ENCODE measurements at regions of chr19 and their contacts with region 1.

Region 1: DNA sequence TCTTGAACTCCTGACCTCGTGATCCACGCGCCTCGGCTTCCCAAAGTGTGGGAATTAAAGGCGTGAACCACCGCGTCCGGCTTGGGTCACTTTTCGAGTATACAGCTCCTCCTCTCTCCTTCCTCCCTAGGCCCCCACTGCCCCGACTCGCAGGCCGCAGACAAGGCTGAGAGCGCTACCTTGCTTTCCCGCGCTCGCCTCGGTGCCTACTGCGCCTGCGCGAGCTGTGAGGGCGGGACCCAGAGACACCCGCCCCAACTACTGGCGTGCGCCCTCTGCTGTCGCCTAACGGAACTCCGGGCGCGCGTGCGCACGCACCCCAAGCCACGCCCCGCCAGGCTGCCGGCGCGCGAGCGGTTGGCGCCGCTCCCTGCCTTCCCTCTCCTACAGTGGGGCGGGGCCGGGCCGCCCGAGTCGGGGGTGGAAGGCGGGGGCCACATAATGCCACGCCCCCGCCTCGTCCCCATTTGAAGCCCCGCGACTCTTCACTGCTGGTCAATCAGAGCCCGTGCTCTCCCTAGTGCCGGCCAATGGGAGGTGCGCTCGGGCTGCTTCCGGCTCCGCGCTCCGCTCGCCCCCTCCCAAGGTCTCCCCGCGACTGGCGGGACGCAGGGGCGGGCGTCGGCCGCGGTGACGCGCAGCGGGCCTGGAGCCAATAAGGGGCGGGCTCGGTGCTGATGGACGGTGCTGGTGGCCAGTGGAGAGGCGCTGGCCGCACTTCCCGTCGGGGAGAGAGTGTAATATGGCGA is at the start of gene RAB8A:
- DNase-seq: peak; percentile 98 to 100 (median 99)
- ATAC-seq: peak; percentile 86
- H3K4me3 ChIP-seq: peak within 1 kb of the TSS; percentile 94
- H3K4me3 Mint-ChIP-seq: peak within 1 kb of the TSS; percentile 95
- H3K27ac ChIP-seq: peak within 1 kb of the TSS; percentile 89 to 92
- H3K27ac Mint-ChIP-seq: peak within 1 kb of the TSS; percentile 96
- H3K4me1 ChIP-seq: peaks cover 51% of the 10 kb centered on the region
- H3K4me1 Mint-ChIP-seq: peaks cover 44% of the 10 kb centered on the region
- H3K27me3 ChIP-seq: no peaks in the 10 kb centered on the region
- H3K27me3 Mint-ChIP-seq: no peaks in the 10 kb centered on the region
- CTCF ChIP-seq: peak; percentile 84
- total RNA-seq, gene RAB8A: 74.9 to 79.0 TPM

Region 2: GRCh38 chr19:16041299-16041990 is 69.9 kb before region 1 on chr19:
- CTCF ChIA-PET with region 1: interaction called, 19 read pairs
- POLR2A ChIA-PET with region 1: interaction called, 5 read pairs
- intact Hi-C with region 1: loop called in 1 of 2 experiments (anchors 2 kb)
- DNase-seq: peak; percentile 55 to 84 (median 68)
- ATAC-seq: peak; percentile 79
- H3K4me3 ChIP-seq: peak overlapping the region; percentile 11
- H3K4me3 Mint-ChIP-seq: no peak overlapping the region
- H3K27ac ChIP-seq: no peak overlapping the region
- H3K27ac Mint-ChIP-seq: no peak overlapping the region
- H3K4me1 ChIP-seq: peaks cover 10% of the 10 kb centered on the region
- H3K4me1 Mint-ChIP-seq: peaks cover 5% of the 10 kb centered on the region
- H3K27me3 ChIP-seq: no peaks in the 10 kb centered on the region
- H3K27me3 Mint-ChIP-seq: no peaks in the 10 kb centered on the region
- CTCF ChIP-seq: peak; percentile 98

Region 3: GRCh38 chr19:16070366-16070990 is 40.9 kb before region 1 on chr19:
- CTCF ChIA-PET with region 1: interaction called, 27 read pairs
- POLR2A ChIA-PET with region 1: interaction called, 39 read pairs
- intact Hi-C with region 1: loop called (anchors 1 to 2 kb)
- DNase-seq: peak; percentile 69 to 98 (median 86)
- ATAC-seq: peak; percentile 88
- H3K4me3 ChIP-seq: peak overlapping the region; percentile 31
- H3K4me3 Mint-ChIP-seq: peak overlapping the region; percentile 76
- H3K27ac ChIP-seq: peak overlapping the region; percentile 84 to 92
- H3K27ac Mint-ChIP-seq: no peak overlapping the region
- H3K4me1 ChIP-seq: peaks cover 77% of the 10 kb centered on the region
- H3K4me1 Mint-ChIP-seq: peaks cover 40% of the 10 kb centered on the region
- H3K27me3 ChIP-seq: no peaks in the 10 kb centered on the region
- H3K27me3 Mint-ChIP-seq: no peaks in the 10 kb centered on the region
- CTCF ChIP-seq: peak; percentile 37

Region 4: DNA sequence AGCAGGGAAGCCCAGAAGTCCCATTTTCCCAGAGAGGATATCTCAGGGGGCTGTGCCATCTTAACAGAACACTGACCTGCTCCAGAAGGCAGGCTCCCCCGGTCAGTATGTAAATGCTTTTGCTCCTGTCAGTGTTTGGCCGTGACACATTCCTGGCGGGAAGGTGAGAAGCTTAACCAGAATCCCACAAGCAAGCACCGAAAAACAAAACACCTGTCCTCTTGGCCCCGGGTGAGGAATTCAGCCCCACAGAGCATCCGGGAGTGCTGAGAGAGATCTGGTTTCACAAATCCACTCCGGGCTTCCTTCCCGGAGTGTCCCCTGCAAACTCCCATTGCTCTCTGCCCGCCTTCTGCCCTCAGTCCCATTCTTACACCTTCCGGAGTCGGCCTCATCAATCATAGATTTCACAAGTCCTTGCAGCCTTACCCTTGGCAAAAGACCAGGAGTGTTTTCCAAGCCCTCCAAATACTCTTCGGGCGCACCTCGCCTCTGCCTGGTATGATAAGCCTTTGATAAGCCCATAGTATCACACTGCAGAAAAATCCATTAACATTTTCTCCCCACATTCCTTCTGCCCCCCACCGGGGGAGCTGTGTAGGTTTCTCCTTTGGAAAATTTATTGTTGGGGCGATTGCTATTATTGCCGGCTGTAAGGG is 22.9 kb before region 1 on chr19:
- CTCF ChIA-PET with region 1: interaction called, 19 read pairs
- POLR2A ChIA-PET with region 1: interaction called, 25 read pairs
- intact Hi-C with region 1: loop called in 1 of 2 experiments (anchors 2 kb)
- DNase-seq: no peak
- ATAC-seq: no peak
- H3K4me3 ChIP-seq: no peak overlapping the region
- H3K4me3 Mint-ChIP-seq: no peak overlapping the region
- H3K27ac ChIP-seq: no peak overlapping the region
- H3K27ac Mint-ChIP-seq: peak overlapping the region; percentile 64
- H3K4me1 ChIP-seq: peaks cover 45% of the 10 kb centered on the region
- H3K4me1 Mint-ChIP-seq: peaks cover 46% of the 10 kb centered on the region
- H3K27me3 ChIP-seq: no peaks in the 10 kb centered on the region
- H3K27me3 Mint-ChIP-seq: no peaks in the 10 kb centered on the region
- CTCF ChIP-seq: no peak

Region 5: GRCh38 chr19:16143399-16144245 is 32.3 kb after region 1 on chr19 and contains the start of gene HSH2D:
- CTCF ChIA-PET with region 1: interaction called, 4 read pairs
- POLR2A ChIA-PET with region 1: interaction called, 10 read pairs
- intact Hi-C with region 1: no loop called
- DNase-seq: peak; percentile 73 to 90 (median 80)
- ATAC-seq: peak; percentile 100
- H3K4me3 ChIP-seq: peak within 1 kb of the TSS; percentile 77
- H3K4me3 Mint-ChIP-seq: peak within 1 kb of the TSS; percentile 97
- H3K27ac ChIP-seq: peak within 1 kb of the TSS; percentile 70 to 74
- H3K27ac Mint-ChIP-seq: peak within 1 kb of the TSS; percentile 96
- H3K4me1 ChIP-seq: peaks cover 60% of the 10 kb centered on the region
- H3K4me1 Mint-ChIP-seq: peaks cover 28% of the 10 kb centered on the region
- H3K27me3 ChIP-seq: no peaks in the 10 kb centered on the region
- H3K27me3 Mint-ChIP-seq: no peaks in the 10 kb centered on the region
- CTCF ChIP-seq: no peak
- total RNA-seq, gene HSH2D: 46.0 to 46.9 TPM

Region 6: DNA sequence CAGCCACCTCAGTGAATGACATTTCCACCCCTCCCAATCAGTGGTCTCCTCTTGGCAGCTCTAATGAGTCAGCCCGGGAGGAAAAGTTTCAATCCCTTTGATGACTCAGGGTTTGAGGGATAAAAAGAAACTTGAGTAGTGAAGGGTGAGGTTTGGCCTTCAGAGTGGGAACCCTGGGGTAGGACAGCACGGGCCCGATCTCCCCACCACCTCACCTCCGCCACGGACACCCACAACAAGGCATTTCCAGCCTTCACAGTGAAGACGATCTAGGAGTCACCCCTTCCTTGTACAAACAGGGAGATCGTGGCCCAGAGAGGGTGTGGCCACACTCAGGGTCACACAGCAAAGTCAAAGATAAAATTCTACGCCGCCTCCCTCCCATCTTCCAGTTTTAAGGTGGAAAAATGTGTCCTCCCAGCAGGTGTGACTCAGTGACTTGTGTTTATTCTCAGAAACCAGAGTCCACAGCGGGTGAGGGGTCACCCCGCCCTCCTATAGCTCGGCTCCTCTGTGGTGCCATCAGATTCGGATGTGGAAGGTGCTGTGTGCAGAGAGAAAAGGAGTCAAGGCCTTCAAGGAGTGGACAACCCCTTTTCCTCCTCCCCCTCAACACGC is 49.7 kb after region 1 on chr19:
- CTCF ChIA-PET with region 1: no interaction called
- POLR2A ChIA-PET with region 1: no interaction called
- intact Hi-C with region 1: no loop called
- DNase-seq: no peak
- ATAC-seq: no peak
- H3K4me3 ChIP-seq: no peak overlapping the region
- H3K4me3 Mint-ChIP-seq: no peak overlapping the region
- H3K27ac ChIP-seq: no peak overlapping the region
- H3K27ac Mint-ChIP-seq: no peak overlapping the region
- H3K4me1 ChIP-seq: peaks cover 5% of the 10 kb centered on the region
- H3K4me1 Mint-ChIP-seq: no peaks in the 10 kb centered on the region
- H3K27me3 ChIP-seq: no peaks in the 10 kb centered on the region
- H3K27me3 Mint-ChIP-seq: no peaks in the 10 kb centered on the region
- CTCF ChIP-seq: no peak